Sigmoid colon (tissue), 7 donors: ENCODE measurements at regions of chr10 and their contacts with region 1.

Region 1: DNA sequence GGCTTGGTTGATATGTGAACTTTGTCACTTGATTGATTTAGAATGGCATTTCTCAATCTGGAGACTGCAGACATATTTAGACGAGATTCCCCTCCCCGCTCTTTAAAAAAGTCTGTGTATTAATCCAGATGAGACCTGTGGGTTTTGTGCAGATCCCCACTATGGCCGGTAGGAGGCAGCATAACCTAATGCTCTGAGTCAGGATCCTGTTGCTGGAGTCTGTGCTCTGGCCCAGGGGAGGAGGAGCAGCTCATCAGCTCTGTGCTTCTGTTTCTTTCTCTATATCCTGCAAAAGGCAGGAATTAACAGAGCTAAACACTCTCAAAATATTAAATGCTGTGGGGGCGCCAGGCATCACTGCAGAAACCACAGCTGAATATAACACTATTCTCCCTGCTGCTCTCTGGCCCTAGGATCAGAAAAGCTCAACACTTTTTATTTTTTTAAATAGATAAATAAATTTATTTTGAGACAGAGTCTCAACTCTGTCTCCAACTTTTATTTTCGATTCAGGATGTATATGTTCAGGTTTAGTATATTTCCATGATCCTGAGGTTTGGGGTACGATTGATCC is 23.9 kb upstream of the SEPHS1 start:
- DNase-seq: peak; percentile 83
- H3K4me3 ChIP-seq: no peak overlapping the region
- H3K27ac ChIP-seq: no peak overlapping the region
- H3K4me1 ChIP-seq: no peaks in the 10 kb centered on the region
- H3K27me3 ChIP-seq: peaks cover 0 to 5% (median 0%) of the 10 kb centered on the region in 3 donors
- CTCF ChIP-seq: peak; percentile 51 to 90 (median 86)
- EP300 ChIP-seq: no peak
- POLR2A ChIP-seq: no peak

Region 2: GRCh38 chr10:13238271-13239073 is 133.5 kb before region 1 on chr10:
- intact Hi-C with region 1: no loop called
- DNase-seq: peak; percentile 41
- H3K4me3 ChIP-seq: no peak overlapping the region
- H3K27ac ChIP-seq: no peak overlapping the region
- H3K4me1 ChIP-seq: no peaks in the 10 kb centered on the region
- H3K27me3 ChIP-seq: peaks cover 0 to 10% (median 0%) of the 10 kb centered on the region in 3 donors
- CTCF ChIP-seq: no peak
- EP300 ChIP-seq: no peak
- POLR2A ChIP-seq: no peak

Region 3: GRCh38 chr10:13440185-13441061 is 68.4 kb after region 1 on chr10:
- intact Hi-C with region 1: loop called (anchors 1 kb)
- DNase-seq: peak; percentile 66
- H3K4me3 ChIP-seq: peak overlapping the region in 3 of 4 donors; percentile 19 to 38 (median 37)
- H3K27ac ChIP-seq: no peak overlapping the region
- H3K4me1 ChIP-seq: peaks cover 0 to 15% (median 14%) of the 10 kb centered on the region in 4 donors
- H3K27me3 ChIP-seq: peaks cover 0 to 27% (median 7%) of the 10 kb centered on the region in 3 donors
- CTCF ChIP-seq: peak; percentile 39 to 76 (median 70)
- EP300 ChIP-seq: no peak
- POLR2A ChIP-seq: no peak

Region 4: DNA sequence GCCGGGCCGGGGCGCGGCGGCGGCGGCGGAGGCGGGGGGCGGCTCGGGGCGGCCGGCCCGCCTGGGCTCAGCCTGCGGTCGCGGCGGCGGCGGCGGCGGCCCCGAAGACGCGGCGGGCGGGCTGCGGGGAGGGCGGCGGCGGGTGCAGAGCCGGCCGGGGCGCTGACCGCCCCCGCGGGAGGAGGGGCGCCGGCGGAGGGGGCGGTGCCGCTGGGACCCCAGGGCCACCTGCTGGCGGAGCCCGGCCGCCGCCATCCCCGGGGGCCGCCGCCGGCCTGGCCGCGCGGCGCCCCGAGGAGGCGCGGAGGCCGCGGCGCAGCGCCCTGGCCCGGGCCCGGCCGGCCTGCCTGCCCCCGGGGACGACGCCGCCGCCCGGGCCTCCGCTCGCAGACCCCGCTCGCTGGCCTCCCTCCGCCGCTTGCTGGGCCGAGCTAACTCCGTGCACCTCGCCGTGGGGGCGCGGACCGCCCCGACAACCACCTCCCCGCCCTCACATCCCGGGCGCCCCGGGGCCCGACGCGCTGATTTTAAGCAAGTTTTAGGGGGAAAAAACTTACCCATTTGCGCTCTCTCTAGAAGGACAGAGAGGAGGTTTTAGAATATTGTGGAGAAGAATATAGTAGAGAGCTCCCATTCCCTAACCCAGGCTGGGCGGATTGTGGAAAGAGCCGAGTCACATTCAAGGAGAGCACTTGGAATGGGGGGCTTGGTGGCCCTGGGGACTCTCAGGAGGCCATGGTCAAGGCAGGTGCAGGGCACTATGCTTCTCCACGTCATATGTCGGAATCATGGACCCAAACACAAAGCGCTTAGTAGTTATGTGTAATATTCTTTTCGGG is 157.1 kb after region 1 on chr10 and contains the start of gene BEND7:
- intact Hi-C with region 1: loop called (anchors 2 kb)
- DNase-seq: no peak
- H3K4me3 ChIP-seq: peak within 1 kb of the TSS; percentile 55 to 72 (median 68)
- H3K27ac ChIP-seq: peak within 1 kb of the TSS; percentile 81 to 91 (median 86)
- H3K4me1 ChIP-seq: peaks cover 0 to 31% (median 24%) of the 10 kb centered on the region in 4 donors
- H3K27me3 ChIP-seq: no peaks in the 10 kb centered on the region
- CTCF ChIP-seq: no peak
- EP300 ChIP-seq: no peak
- POLR2A ChIP-seq: no peak
- total RNA-seq, gene BEND7: 11.8 to 27.2 (median 24.0) TPM

Region 5: GRCh38 chr10:13586676-13587355 is 214.8 kb after region 1 on chr10 and contains the start of gene PRPF18:
- intact Hi-C with region 1: loop called (anchors 5 kb)
- DNase-seq: peak; percentile 95
- H3K4me3 ChIP-seq: peak within 1 kb of the TSS; percentile 65 to 91 (median 76)
- H3K27ac ChIP-seq: peak within 1 kb of the TSS; percentile 60 to 78 (median 70)
- H3K4me1 ChIP-seq: peaks cover 0 to 20% (median 15%) of the 10 kb centered on the region in 4 donors
- H3K27me3 ChIP-seq: peaks cover 0 to 4% (median 0%) of the 10 kb centered on the region in 3 donors
- CTCF ChIP-seq: peak; percentile 91 to 95 (median 91)
- EP300 ChIP-seq: no peak
- POLR2A ChIP-seq: no peak
- total RNA-seq, gene PRPF18: 25.8 to 39.3 (median 29.0) TPM

Region 6: GRCh38 chr10:13987446-13987845 is 615.5 kb after region 1 on chr10:
- intact Hi-C with region 1: no loop called
- DNase-seq: no peak
- H3K4me3 ChIP-seq: no peak overlapping the region
- H3K27ac ChIP-seq: peak overlapping the region in 1 of 4 donors; percentile 28
- H3K4me1 ChIP-seq: peaks cover 0 to 21% (median 10%) of the 10 kb centered on the region in 4 donors
- H3K27me3 ChIP-seq: no peaks in the 10 kb centered on the region
- CTCF ChIP-seq: no peak
- EP300 ChIP-seq: no peak
- POLR2A ChIP-seq: no peak